ENCODE measurements at regions of chr21 and their contacts with region 1.

Region 1: GRCh38 chr21:39137248-39138178 is 45.7 kb downstream of the PSMG1 start:
- DNase-seq: no peak
- H3K4me3 Mint-ChIP-seq: no peak overlapping the region
- H3K27ac Mint-ChIP-seq: no peak overlapping the region
- H3K4me1 Mint-ChIP-seq: no peaks in the 10 kb centered on the region
- H3K27me3 Mint-ChIP-seq: peaks cover 1% of the 10 kb centered on the region

Region 2: GRCh38 chr21:38159355-38159754 is 978.2 kb before region 1 on chr21:
- CTCF ChIA-PET with region 1: no interaction called
- POLR2A ChIA-PET with region 1: no interaction called
- intact Hi-C with region 1: loop called (anchors 5 kb)
- DNase-seq: peak; percentile 65
- H3K4me3 Mint-ChIP-seq: no peak overlapping the region
- H3K27ac Mint-ChIP-seq: no peak overlapping the region
- H3K4me1 Mint-ChIP-seq: no peaks in the 10 kb centered on the region
- H3K27me3 Mint-ChIP-seq: peaks cover 3% of the 10 kb centered on the region

Region 3: DNA sequence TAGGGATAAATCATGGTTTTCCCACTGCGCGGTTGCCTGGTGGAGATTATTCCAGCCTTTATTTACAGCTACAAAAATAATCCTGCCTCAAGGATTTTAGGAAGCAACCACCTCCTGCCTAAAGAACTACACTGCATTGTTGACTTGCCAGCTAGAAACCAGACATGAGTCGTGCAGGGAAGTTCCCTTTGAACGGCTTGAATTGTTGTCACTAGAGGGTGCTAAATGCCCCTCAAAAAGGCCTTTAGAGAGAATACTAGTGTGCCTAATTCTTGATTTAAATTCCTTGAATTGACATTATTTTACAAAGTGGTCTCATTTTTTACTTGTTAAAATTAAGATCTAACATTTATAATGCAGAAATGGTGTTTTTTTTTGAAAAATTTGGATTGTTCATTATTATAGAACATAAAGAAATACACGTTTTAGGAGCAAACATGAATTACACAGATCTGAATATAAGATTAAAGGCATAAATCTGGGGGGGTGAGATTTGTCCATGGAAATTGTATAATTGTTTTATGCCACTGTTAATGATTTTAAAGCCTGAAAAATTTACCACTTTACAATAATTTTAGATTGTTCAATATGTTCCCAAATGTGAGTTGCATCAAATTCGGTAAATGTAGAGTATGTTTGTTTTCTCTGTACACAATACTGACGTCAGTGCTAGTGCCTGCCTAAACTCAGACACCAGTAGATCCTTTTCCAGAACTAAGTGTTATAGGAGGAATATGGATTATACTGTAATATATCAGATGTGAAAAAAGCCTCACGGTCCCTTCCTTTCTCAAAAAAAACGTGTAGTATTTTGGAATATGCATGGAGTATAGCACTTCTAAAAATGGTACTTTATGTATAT is 631.6 kb before region 1 on chr21:
- CTCF ChIA-PET with region 1: interaction called, 4 read pairs
- POLR2A ChIA-PET with region 1: no interaction called
- intact Hi-C with region 1: loop called (anchors 5 kb)
- DNase-seq: peak; percentile 22
- H3K4me3 Mint-ChIP-seq: no peak overlapping the region
- H3K27ac Mint-ChIP-seq: no peak overlapping the region
- H3K4me1 Mint-ChIP-seq: peaks cover 4% of the 10 kb centered on the region
- H3K27me3 Mint-ChIP-seq: peaks cover 30% of the 10 kb centered on the region

Region 4: GRCh38 chr21:38733973-38734546 is 403.5 kb before region 1 on chr21:
- CTCF ChIA-PET with region 1: interaction called, 26 read pairs
- POLR2A ChIA-PET with region 1: no interaction called
- intact Hi-C with region 1: loop called (anchors 1 kb)
- DNase-seq: peak; percentile 78
- H3K4me3 Mint-ChIP-seq: peak overlapping the region; percentile 65
- H3K27ac Mint-ChIP-seq: no peak overlapping the region
- H3K4me1 Mint-ChIP-seq: peaks cover 10% of the 10 kb centered on the region
- H3K27me3 Mint-ChIP-seq: peaks cover 24% of the 10 kb centered on the region

Region 5: GRCh38 chr21:39066829-39067780 is 70.4 kb before region 1 on chr21:
- CTCF ChIA-PET with region 1: no interaction called
- POLR2A ChIA-PET with region 1: no interaction called
- intact Hi-C with region 1: no loop called
- DNase-seq: no peak
- H3K4me3 Mint-ChIP-seq: no peak overlapping the region
- H3K27ac Mint-ChIP-seq: no peak overlapping the region
- H3K4me1 Mint-ChIP-seq: no peaks in the 10 kb centered on the region
- H3K27me3 Mint-ChIP-seq: peaks cover 2% of the 10 kb centered on the region